Activated CD4-positive, alpha-beta memory T cell treated with anti-CD3 and anti-CD28 coated beads, Interleukin-2, amount 10 ng/mL, durations not matched to agents 7 days and 5 days (primary cell): ENCODE measurements at regions of chr2 and their contacts with region 1.

Region 1: DNA sequence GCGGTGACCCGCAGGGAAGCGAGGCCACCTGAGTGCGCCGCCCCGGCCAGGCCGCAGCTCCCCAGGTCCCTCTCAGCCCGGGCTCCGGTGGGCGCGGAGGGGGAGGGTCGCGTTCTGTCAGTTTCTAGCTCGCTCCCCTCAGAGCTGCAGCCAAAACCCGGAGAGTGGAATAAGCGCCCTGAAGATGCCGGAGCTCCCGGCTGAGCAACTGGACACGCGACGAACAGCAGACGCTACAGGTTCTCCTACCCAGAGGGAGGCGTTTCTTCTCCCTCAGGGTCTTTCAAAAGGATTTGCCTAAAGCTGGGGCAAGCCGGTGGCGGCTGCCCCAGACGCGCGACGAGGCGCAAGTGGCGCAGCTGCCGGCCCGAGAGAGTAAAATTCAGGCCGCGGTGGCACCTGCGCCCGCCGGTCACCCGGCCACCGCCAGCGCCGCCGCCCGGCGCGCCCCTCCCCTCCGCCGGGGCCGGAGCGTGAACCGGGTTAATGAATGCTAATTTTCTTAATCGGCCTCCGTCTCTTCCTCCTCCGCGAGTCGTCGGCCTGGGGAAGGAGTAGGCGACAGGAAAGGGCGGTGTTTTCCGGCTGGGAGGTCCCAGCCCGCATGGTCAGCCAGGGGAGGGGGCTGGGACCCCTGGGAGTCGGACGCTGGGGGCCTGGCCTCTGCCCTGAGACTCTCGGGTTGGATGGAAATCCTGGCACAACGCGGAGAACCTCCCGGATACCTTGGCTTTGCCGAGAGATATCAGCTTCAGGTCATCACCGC is 845 bp upstream of the CDC42EP3 start:
- DNase-seq: peak; percentile 74
- H3K4me3 Mint-ChIP-seq: peak overlapping the region; percentile 81
- H3K27ac Mint-ChIP-seq: peak overlapping the region; percentile 81
- H3K4me1 Mint-ChIP-seq: peaks cover 34% of the 10 kb centered on the region
- H3K27me3 Mint-ChIP-seq: no peaks in the 10 kb centered on the region

Region 2: DNA sequence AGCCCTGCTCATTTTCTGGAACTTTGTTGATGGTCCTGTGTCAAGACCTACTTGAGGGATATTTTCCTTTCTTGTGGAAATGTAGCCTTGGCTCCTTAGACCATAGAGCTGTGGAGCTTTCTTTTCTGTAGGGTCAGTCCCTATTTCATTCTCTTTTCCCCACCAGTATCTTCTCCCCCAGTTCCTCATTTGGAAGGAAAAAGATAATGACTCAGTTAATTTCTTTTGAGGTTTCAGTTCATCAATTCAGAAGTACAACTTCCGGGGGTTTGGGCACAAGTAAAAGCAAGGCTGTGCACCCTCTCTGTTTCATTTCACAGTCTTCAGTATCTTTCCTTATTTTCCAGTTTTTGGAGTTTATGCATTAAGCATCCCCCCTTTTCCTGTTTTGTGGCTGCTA is 71.6 kb before region 1 on chr2:
- CTCF ChIA-PET with region 1: interaction called, 6 read pairs
- POLR2A ChIA-PET with region 1: interaction called, 36 read pairs
- DNase-seq: no peak
- H3K4me3 Mint-ChIP-seq: peak overlapping the region; percentile 85
- H3K27ac Mint-ChIP-seq: peak overlapping the region; percentile 89
- H3K4me1 Mint-ChIP-seq: peaks cover 68% of the 10 kb centered on the region
- H3K27me3 Mint-ChIP-seq: peaks cover 5% of the 10 kb centered on the region

Region 3: GRCh38 chr2:37648331-37649011 is 23.8 kb before region 1 on chr2:
- CTCF ChIA-PET with region 1: interaction called, 7 read pairs
- POLR2A ChIA-PET with region 1: interaction called, 29 read pairs
- DNase-seq: peak; percentile 66
- H3K4me3 Mint-ChIP-seq: peak overlapping the region; percentile 12
- H3K27ac Mint-ChIP-seq: peak overlapping the region; percentile 91
- H3K4me1 Mint-ChIP-seq: peaks cover 92% of the 10 kb centered on the region
- H3K27me3 Mint-ChIP-seq: no peaks in the 10 kb centered on the region

Region 4: GRCh38 chr2:37683921-37684780 is 11.9 kb after region 1 on chr2:
- CTCF ChIA-PET with region 1: interaction called, 13 read pairs
- POLR2A ChIA-PET with region 1: interaction called, 29 read pairs
- DNase-seq: no peak
- H3K4me3 Mint-ChIP-seq: peak overlapping the region; percentile 15
- H3K27ac Mint-ChIP-seq: peak overlapping the region; percentile 92
- H3K4me1 Mint-ChIP-seq: peaks cover 46% of the 10 kb centered on the region
- H3K27me3 Mint-ChIP-seq: no peaks in the 10 kb centered on the region

Region 5: DNA sequence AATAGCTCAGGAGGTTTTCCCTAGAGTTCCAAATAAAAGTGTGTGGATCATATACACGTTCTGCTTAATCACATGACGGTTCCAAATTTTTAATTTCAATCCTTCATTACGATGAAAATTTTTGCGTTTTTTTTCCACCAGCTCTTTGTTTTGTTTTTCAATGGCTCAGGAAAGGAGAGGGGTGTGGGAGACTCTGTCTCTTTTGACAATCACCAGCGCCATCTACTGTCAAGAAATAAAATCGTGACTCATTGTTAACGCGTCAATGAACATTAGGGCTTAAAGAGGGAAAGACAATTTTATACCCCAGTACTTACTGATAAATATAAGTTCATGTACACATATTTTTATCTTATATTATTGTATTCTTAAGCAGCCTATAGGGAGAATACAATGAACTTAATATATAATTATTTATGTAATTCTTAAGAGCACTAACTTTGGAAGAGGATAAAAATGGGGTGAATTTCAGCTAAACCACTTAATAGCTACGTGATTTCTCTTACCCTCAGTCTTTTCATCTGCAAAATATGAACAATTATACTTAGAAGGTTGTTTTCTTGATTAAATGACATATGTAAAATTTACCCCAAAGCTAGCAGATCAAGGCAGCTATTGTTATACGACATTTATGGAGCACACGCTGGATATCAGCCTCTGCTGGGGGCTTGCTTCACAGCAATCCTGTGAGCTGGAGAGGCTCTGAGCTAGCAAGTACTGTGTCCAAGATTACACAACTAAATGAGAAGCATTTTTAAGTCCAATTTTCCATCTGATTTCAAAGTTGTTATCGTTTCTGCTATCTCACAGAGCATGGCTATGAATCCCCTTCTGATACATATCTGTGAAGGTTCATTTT is 205.4 kb after region 1 on chr2:
- CTCF ChIA-PET with region 1: interaction called, 13 read pairs
- POLR2A ChIA-PET with region 1: interaction called, 8 read pairs
- DNase-seq: no peak
- H3K4me3 Mint-ChIP-seq: no peak overlapping the region
- H3K27ac Mint-ChIP-seq: no peak overlapping the region
- H3K4me1 Mint-ChIP-seq: peaks cover 13% of the 10 kb centered on the region
- H3K27me3 Mint-ChIP-seq: peaks cover 2% of the 10 kb centered on the region